Caco-2 (cell line): ENCODE measurements at regions of chr6 and their contacts with region 1.

Region 1: DNA sequence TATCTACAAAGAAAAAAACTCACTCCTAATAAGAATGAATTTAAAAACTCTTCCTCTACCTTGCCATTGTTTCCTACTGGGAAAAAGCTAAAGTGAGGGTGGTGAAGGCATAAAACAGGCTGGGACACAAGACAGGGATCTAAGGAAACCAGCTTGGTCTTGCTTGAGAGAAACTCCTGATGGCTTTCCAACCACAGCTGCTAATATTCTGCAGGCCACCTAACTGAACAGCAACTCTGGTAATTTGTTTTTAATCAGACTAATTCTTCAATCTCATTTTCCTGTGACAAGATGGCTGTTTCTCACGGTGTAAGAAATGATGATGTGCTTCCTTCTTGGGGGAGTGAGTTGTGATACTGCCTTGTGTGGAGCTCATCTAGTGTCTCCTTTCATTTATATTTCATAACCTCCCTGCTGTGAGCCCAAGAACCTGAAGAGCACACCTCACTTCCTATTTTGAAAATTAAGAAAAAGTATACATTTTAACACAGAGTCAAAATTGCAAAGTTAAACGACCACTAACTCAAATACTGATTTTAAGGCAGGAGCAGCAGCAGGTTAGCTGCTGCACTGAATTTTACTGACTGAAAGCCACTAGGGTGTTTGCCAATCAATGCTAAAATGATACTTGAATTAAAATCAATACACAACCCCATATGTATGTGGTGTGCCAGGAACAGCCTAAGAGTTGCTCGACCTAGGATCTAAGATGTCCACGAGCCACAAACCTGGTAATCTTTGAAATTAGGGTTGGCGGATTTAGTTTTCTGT is 58.0 kb downstream of the BACH2 start:
- DNase-seq: no peak
- H3K4me3 ChIP-seq: no peak overlapping the region
- H3K4me3 Mint-ChIP-seq: no peak overlapping the region
- H3K27ac Mint-ChIP-seq: no peak overlapping the region
- H3K4me1 ChIP-seq: peaks cover 19% of the 10 kb centered on the region
- H3K4me1 Mint-ChIP-seq: peaks cover 23% of the 10 kb centered on the region
- H3K27me3 ChIP-seq: no peaks in the 10 kb centered on the region
- H3K27me3 Mint-ChIP-seq: no peaks in the 10 kb centered on the region
- CTCF ChIP-seq: no peak

Region 2: DNA sequence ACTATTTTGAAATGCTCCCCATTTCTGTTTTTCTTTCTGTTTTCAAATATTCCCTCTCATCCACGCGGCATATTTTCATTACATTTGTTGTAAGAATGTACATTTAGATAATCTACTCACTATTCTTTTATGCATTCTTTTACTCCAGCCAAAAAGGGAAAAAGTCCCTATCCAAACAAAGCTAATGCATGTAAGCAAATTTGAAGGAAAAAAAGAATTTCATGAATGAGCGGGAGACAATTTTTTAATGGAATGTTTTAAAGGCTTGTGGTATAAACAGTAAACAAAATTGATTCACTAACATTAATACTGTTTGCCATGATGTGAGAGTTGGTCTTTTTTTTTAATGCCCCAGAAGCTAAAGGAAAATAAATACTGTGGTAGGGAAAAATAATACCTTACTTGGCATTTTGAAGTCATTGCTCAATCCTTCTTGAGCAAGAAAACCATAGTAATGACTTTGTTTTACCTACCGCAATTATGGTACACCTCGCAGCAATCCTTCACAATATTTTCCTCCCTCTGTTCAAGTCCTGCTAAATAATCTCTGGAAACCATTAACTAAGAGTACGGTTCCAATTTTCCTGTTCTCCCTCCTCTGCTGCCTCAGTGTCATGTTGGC is 21.1 kb before region 1 on chr6:
- CTCF ChIA-PET with region 1: interaction called, 3 read pairs
- POLR2A ChIA-PET with region 1: no interaction called
- intact Hi-C with region 1: loop called (anchors 1 kb)
- DNase-seq: no peak
- H3K4me3 ChIP-seq: no peak overlapping the region
- H3K4me3 Mint-ChIP-seq: no peak overlapping the region
- H3K27ac Mint-ChIP-seq: no peak overlapping the region
- H3K4me1 ChIP-seq: peaks cover 33% of the 10 kb centered on the region
- H3K4me1 Mint-ChIP-seq: peaks cover 10% of the 10 kb centered on the region
- H3K27me3 ChIP-seq: no peaks in the 10 kb centered on the region
- H3K27me3 Mint-ChIP-seq: no peaks in the 10 kb centered on the region
- CTCF ChIP-seq: no peak

Region 3: DNA sequence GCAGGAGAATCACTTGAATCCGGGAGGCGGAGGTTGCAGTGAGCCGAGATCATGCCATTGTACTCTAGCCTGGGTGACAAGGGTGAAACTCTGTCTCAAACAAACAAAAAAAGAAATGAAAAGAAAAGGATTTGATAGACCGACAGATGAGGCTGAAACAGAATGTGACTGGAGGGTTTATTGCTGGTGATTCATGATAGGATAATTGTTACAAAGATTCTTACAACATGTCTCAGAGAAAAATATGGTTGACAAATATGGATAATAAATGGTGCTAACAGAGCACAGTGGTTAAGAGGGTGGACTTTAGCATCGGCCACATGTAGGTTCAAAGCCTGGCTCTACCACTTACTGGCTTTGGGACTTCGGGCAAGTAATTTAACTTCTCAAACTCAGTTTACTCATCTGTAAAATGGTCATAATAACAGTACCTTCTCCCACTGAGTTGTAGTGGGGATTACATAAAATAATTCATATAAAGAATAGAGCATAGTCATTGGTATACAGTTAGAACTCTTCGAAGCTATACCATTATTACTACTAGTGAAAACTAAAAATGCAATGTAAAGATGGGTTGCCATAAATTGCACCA is 216.3 kb after region 1 on chr6:
- CTCF ChIA-PET with region 1: no interaction called
- POLR2A ChIA-PET with region 1: no interaction called
- intact Hi-C with region 1: no loop called
- DNase-seq: no peak
- H3K4me3 ChIP-seq: no peak overlapping the region
- H3K4me3 Mint-ChIP-seq: no peak overlapping the region
- H3K27ac Mint-ChIP-seq: no peak overlapping the region
- H3K4me1 ChIP-seq: no peaks in the 10 kb centered on the region
- H3K4me1 Mint-ChIP-seq: no peaks in the 10 kb centered on the region
- H3K27me3 ChIP-seq: no peaks in the 10 kb centered on the region
- H3K27me3 Mint-ChIP-seq: no peaks in the 10 kb centered on the region
- CTCF ChIP-seq: no peak